GM12878 (cell line): ENCODE measurements at regions of chr3 and their contacts with region 1.

Region 1: DNA sequence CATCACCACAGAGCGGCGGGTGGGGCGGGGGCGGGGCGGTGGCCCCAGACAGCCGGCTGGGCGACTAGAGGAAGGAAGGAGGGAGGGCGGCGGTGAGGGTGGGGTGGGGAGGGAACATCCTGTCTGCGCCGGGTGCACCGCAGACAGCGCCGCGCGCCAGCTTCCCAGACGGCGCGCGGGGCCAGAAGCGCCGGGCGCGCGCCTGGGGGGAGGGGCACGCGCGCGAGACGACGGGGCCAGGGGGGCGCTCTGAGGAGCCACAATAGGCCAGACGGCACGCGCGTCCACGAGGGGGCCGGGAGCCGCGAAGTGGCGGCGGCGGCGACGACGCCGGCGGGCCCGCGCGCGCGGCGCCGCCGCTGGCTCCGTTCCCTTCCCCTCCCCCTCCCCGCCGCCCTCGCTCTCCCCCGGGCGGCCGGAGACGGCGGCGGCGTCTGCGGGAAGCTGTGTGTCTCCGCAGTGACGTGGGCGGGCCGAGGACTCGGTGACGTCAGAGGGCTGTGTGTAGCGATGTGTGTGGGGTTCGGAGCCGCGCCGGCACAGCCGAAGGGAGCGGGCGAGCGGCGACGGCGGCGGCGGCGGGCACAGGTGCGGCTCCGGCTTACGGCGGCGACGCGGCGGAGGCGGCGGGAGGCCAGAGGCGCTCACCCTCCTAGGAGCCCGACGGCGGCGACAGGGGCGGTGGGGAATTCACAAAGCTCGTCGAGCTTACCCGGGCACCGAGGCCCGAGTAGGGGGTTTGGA is at the start of gene SKIL:
- DNase-seq: peak; percentile 60
- ATAC-seq: peak; percentile 61
- H3K4me3 ChIP-seq: peak within 1 kb of the TSS; percentile 86
- H3K27ac ChIP-seq: peak within 1 kb of the TSS; percentile 96
- H3K4me1 ChIP-seq: peaks cover 37% of the 10 kb centered on the region
- H3K27me3 ChIP-seq: no peaks in the 10 kb centered on the region
- CTCF ChIP-seq: peak in 2 of 3 experiments; percentile 14 to 15; a peak in 1 of 6 replicates
- EP300 ChIP-seq: peak; percentile 25 to 63; a peak in 3 of 4 replicates
- POLR2A ChIP-seq: peak; percentile 76
- RAD21 ChIP-seq: no peak
- polyA plus RNA-seq, gene SKIL: 2.7 to 5.7 TPM

Region 2: DNA sequence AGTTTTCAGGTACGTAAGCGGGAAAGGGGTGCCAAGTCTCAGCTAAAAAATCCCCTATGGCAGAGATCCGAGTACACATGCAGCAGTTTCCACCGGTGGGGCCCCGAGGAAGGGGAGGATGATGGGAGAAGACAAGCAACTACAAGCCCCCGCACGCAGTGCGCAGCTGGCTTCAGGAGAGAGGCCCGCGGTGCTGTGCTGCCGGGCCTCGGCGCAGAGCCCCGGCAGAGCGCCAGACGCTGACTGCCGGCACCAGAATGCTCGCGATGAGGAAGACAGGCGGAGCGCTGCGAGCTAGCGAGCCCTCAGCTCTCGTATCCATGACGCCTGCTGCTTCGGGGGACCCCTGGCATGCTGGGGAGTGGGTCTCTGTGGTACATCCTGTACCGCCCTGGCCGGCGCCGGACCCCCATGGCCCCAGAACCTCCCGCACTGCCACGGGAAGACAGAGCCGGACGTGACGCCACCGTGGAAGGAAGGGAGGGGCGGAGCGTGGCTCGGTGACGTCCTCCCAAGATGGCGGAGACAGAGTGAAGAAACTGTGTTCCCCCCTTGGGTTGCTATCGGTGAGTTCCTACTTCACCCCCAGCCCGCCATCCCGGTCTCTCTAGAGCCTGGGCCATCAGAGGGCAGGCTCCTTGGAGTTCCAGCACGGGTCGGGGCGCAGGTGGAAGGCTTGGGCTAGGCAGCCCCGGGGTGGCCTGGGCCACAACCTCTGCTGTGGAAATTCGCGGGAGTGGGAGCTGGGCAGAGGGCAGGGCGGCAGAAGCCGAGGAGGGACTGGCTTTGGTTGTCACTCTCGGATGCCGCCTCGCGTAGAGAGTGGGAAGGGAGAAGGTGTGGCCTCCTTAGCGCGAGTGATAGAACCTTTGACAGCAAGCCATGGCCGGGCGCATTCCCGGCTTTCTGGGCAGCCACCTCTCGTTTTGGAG is 584.2 kb before region 1 on chr3 and contains the start of gene MYNN:
- CTCF ChIA-PET with region 1: no interaction called
- POLR2A ChIA-PET with region 1: interaction called, 5 read pairs
- RAD21 ChIA-PET with region 1: no interaction called
- SMC1A ChIA-PET with region 1: no interaction called
- in situ Hi-C with region 1: no loop called
- intact Hi-C with region 1: loop called (anchors 5 kb)
- DNase-seq: peak; percentile 63
- ATAC-seq: peak; percentile 88
- H3K4me3 ChIP-seq: peak within 1 kb of the TSS; percentile 97
- H3K27ac ChIP-seq: peak within 1 kb of the TSS; percentile 99
- H3K4me1 ChIP-seq: peaks cover 14% of the 10 kb centered on the region; the same call in 1 of the 2 replicates
- H3K27me3 ChIP-seq: no peaks in the 10 kb centered on the region
- CTCF ChIP-seq: peak in 2 of 3 experiments; percentile 0 to 12; a peak in 1 of 6 replicates
- EP300 ChIP-seq: no peak
- POLR2A ChIP-seq: peak; percentile 99
- RAD21 ChIP-seq: no peak
- polyA plus RNA-seq, gene MYNN: 14.9 to 16.7 TPM

Region 3: DNA sequence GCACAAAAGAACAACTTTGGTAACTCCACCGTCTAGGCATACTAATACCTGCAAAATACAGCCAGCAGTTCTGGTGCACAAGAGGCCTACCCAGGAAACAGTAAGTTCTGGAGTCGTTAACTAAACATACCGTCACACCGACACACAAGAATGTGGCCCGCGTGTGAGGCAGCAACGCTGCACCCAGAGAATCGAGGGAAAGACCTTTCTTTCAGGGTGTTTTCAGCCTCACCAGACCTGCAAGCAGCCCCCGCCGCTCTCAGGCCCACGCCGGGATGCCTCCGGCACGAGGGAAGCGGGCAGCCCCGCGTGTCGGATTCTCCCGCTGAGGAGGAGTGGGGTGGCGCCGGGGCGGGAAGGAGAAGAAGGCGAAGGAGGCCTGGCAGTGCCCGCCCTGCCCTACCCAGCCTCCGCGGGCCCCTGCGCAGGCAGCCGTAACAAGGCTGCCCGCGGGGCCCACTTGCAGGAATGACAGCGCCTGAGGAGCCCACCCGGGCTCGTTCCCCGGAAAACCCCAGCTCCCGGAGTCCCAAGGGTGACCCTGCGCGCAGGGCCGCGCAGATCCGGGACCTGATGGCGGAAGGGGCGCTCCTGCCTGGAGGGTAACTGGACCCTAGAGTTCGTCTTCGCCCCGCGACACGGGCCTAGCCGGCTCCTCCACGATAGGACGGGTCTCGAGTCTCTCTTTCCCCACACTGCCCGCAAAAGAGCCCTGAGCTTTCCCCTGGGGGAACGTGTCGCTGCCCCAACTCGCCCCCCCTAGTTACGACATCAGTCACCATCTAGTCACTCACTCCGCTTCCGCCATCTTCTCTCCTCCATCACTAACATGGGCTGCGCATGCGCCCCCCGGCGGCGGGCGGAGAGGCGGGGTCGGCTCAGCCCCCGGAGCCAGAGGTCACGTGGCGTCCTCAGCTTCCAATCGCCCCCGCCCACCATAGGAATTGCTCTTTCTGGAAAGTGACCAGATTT is 176.2 kb before region 1 on chr3 and contains the start of gene PHC3:
- CTCF ChIA-PET with region 1: interaction called, 3 read pairs
- POLR2A ChIA-PET with region 1: no interaction called
- RAD21 ChIA-PET with region 1: interaction called, 4 read pairs
- SMC1A ChIA-PET with region 1: no interaction called
- in situ Hi-C with region 1: no loop called
- intact Hi-C with region 1: loop called (anchors 5 kb)
- DNase-seq: peak; percentile 73
- ATAC-seq: peak; percentile 80
- H3K4me3 ChIP-seq: peak within 1 kb of the TSS; percentile 89
- H3K27ac ChIP-seq: peak within 1 kb of the TSS; percentile 98
- H3K4me1 ChIP-seq: peaks cover 3% of the 10 kb centered on the region
- H3K27me3 ChIP-seq: no peaks in the 10 kb centered on the region
- CTCF ChIP-seq: 0 out of 6 replicates have a peak, but pooled peaks of 1 of the 3 experiments have one; percentile 17
- EP300 ChIP-seq: no peak
- POLR2A ChIP-seq: peak; percentile 79
- RAD21 ChIP-seq: no peak
- polyA plus RNA-seq, gene PHC3: 3.3 to 5.8 TPM

Region 4: GRCh38 chr3:170307671-170308403 is 49.5 kb before region 1 on chr3:
- CTCF ChIA-PET with region 1: interaction called, 3 read pairs
- POLR2A ChIA-PET with region 1: no interaction called
- RAD21 ChIA-PET with region 1: interaction called, 5 read pairs
- SMC1A ChIA-PET with region 1: interaction called, 6 read pairs
- in situ Hi-C with region 1: no loop called
- intact Hi-C with region 1: loop called (anchors 1 kb)
- DNase-seq: no peak
- ATAC-seq: no peak
- H3K4me3 ChIP-seq: no peak overlapping the region
- H3K27ac ChIP-seq: no peak overlapping the region
- H3K4me1 ChIP-seq: no peaks in the 10 kb centered on the region
- H3K27me3 ChIP-seq: no peaks in the 10 kb centered on the region
- CTCF ChIP-seq: no peak
- EP300 ChIP-seq: no peak
- POLR2A ChIP-seq: no peak
- RAD21 ChIP-seq: no peak

Region 5: DNA sequence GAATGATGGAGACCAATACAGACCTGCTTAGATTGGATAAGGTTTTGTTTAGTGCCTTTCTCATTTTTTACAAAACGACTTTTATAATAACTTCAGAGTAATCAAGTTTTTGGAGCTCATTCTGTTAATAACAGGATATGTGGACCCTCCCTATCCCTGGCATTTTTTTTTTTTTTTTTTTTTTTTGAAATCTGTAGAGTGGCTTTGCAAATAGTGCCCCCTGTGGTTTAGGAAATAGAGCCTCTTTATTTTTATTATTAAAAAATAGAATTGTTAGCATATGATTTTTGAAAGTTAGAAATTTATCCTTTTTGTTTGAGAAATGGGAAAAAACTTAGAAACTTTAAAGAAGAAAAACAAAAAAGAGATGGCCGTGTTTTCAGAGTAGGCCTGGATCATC is 11.6 kb after region 1 on chr3:
- CTCF ChIA-PET with region 1: interaction called, 5 read pairs
- POLR2A ChIA-PET with region 1: interaction called, 3 read pairs
- RAD21 ChIA-PET with region 1: interaction called, 5 read pairs
- SMC1A ChIA-PET with region 1: interaction called, 11 read pairs
- in situ Hi-C with region 1: no loop called
- intact Hi-C with region 1: no loop called
- DNase-seq: no peak
- ATAC-seq: no peak; the same call in 2 of the 3 replicates
- H3K4me3 ChIP-seq: no peak overlapping the region
- H3K27ac ChIP-seq: no peak overlapping the region
- H3K4me1 ChIP-seq: peaks cover 9% of the 10 kb centered on the region
- H3K27me3 ChIP-seq: no peaks in the 10 kb centered on the region
- CTCF ChIP-seq: no peak; a peak in 2 of 6 replicates
- EP300 ChIP-seq: no peak
- POLR2A ChIP-seq: no peak
- RAD21 ChIP-seq: peak; percentile 37; the same call in 1 of the 2 replicates

Region 6: DNA sequence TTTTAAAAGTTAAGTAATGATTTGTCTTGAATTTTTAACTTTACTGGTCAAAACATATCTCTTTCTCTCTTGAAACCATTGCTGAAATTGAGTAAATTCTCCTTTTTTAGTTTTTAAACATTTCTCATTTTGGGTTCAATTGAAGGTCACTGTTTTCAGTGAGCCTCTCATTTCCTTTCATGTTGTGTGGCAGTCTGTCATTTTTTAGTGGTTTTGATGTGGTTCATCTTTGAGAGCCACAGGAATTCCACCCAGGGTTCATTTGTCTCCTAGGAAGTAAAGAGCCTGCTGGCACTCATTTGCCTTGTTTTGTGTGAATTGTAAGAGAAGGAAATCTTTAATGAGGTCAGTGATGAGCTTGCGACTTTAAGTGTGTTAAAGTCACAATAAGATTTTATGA is 71.7 kb after region 1 on chr3:
- CTCF ChIA-PET with region 1: no interaction called
- POLR2A ChIA-PET with region 1: no interaction called
- RAD21 ChIA-PET with region 1: no interaction called
- SMC1A ChIA-PET with region 1: no interaction called
- in situ Hi-C with region 1: no loop called
- intact Hi-C with region 1: no loop called
- DNase-seq: no peak
- ATAC-seq: no peak
- H3K4me3 ChIP-seq: no peak overlapping the region
- H3K27ac ChIP-seq: no peak overlapping the region
- H3K4me1 ChIP-seq: peaks cover 16% of the 10 kb centered on the region
- H3K27me3 ChIP-seq: no peaks in the 10 kb centered on the region; a peak in 3 of 4 replicates
- CTCF ChIP-seq: no peak
- EP300 ChIP-seq: no peak
- POLR2A ChIP-seq: no peak
- RAD21 ChIP-seq: no peak

Region 7: DNA sequence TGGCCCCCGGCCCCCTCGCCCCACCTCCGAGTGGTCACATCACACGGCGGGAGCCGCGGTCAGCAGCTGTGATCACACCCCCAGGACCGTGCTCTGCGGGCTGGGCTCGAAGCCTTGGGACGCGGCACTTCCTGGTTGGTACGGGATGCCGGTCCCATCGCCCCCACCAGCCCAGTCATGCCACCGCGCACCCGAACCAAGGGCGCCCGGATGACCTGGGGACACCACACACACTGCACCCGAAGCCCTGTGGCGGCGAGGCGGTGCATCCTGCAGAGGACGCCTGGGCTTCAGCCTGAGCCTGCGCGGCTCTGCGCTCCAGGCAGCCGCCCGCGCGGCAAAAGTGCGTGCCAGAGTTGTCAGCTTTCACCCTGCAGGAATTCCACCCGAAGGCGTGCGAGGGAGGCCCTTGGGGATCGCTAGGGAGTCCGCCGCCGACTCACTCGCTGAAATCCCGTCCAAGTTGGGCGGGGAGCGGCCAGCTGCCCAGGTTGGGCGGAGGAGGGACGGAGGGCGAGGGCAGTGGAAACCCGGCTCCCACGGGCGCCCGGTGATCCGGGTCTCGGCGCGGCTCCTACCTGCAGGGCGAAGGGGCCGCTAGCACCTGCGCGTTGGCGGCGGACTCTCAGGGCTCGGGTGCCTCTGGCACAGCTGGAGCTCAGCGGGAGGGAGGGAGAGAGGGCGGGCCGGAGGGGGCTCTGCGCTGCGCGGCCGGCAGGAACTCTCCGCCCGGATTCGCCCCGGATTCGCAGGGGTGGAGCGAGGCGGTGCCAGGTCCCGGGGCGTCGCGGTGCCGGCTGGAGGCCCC is 1452.7 kb after region 1 on chr3 and contains the start of gene PLD1:
- CTCF ChIA-PET with region 1: no interaction called
- POLR2A ChIA-PET with region 1: no interaction called
- RAD21 ChIA-PET with region 1: no interaction called
- SMC1A ChIA-PET with region 1: no interaction called
- in situ Hi-C with region 1: no loop called
- intact Hi-C with region 1: loop called (anchors 5 kb)
- DNase-seq: no peak
- ATAC-seq: peak; percentile 72
- H3K4me3 ChIP-seq: peak within 1 kb of the TSS; percentile 69
- H3K27ac ChIP-seq: peak within 1 kb of the TSS; percentile 45
- H3K4me1 ChIP-seq: no peaks in the 10 kb centered on the region
- H3K27me3 ChIP-seq: no peaks in the 10 kb centered on the region
- CTCF ChIP-seq: 0 out of 6 replicates have a peak, but pooled peaks of 1 of the 3 experiments have one; percentile 5
- EP300 ChIP-seq: peak; percentile 6 to 12; a peak in 2 of 4 replicates
- POLR2A ChIP-seq: no peak
- RAD21 ChIP-seq: no peak
- polyA plus RNA-seq, gene PLD1: 3.1 to 3.4 TPM